Heart left ventricle (tissue), 16 donors: ENCODE measurements at regions of chr3 and their contacts with region 1.

Region 1: DNA sequence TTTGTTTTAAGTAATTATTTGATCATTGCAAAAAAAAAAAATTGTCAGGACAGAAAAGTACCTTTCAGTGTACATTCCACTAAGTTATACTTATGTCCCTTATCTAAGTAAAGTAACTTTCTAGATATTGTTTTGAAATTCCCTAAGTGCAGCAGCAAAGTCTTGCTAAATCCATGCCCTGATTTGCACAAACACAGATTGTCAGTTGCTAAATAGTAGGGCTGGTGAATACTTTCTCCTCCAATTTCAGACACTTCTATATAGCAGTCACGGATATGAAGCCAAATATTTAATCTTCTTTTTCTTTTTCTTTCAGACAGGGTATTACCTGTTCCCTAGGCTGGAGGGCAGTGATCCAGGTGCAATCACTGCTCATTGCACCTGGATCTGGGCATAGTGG is 12.9 kb downstream of the LRRC2 start:
- DNase-seq: no peak
- ATAC-seq: no peak
- H3K4me3 ChIP-seq: no peak overlapping the region
- H3K27ac ChIP-seq: no peak overlapping the region
- H3K4me1 ChIP-seq: peaks cover 0 to 19% (median 6%) of the 10 kb centered on the region in 12 donors
- H3K27me3 ChIP-seq: no peaks in the 10 kb centered on the region
- CTCF ChIP-seq: no peak
- POLR2A ChIP-seq: no peak

Region 2: DNA sequence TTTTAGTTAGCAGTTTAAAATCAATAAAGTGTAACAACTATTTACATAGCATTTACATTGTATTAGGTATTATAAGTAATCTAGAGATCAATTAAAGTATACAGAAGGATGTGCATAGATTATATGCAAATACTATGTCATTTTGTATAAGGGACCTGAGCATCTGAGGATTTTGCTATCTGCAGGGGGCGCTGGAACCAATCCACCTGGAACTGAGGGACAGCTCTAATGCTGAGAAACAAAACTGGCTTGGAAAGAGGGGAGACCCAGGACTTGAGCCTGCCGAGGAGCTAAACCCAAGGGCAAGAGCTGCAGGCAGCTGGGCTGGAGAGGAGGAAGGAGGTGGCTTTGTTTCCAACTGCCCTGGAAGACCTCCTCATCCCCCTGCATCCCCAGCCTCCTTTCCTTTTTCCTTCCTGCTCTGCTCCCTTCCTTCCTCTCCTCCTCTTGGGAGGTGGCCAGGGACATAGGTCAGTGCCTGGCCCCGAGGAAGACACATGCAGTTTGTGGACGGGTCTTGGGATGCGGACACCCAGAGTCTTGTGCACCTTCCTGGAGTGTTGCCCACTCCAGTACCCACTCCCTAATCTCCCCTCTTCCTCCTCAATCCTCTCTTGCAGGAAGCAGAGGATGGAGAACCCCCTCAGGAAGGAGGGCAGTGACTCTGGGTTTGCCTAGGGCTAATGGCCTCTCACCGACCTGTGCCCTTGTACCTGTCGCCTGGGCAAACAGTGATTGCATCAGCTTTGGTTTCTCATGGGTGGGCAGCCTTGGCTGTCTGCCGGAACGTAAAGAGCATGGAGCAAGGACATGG is 56.2 kb before region 1 on chr3:
- intact Hi-C with region 1: loop called in 4 of 10 experiments (anchors 5 kb)
- DNase-seq: no peak
- ATAC-seq: peak in 1 of 4 donors; percentile 12
- H3K4me3 ChIP-seq: no peak overlapping the region
- H3K27ac ChIP-seq: no peak overlapping the region
- H3K4me1 ChIP-seq: peaks cover 0 to 25% (median 5%) of the 10 kb centered on the region in 12 donors
- H3K27me3 ChIP-seq: no peaks in the 10 kb centered on the region
- CTCF ChIP-seq: peak in 8 of 12 donors; percentile 8 to 38 (median 24)
- POLR2A ChIP-seq: no peak